CD14-positive monocyte (primary cell): ENCODE measurements at regions of chr2 and their contacts with region 1.

Region 1: DNA sequence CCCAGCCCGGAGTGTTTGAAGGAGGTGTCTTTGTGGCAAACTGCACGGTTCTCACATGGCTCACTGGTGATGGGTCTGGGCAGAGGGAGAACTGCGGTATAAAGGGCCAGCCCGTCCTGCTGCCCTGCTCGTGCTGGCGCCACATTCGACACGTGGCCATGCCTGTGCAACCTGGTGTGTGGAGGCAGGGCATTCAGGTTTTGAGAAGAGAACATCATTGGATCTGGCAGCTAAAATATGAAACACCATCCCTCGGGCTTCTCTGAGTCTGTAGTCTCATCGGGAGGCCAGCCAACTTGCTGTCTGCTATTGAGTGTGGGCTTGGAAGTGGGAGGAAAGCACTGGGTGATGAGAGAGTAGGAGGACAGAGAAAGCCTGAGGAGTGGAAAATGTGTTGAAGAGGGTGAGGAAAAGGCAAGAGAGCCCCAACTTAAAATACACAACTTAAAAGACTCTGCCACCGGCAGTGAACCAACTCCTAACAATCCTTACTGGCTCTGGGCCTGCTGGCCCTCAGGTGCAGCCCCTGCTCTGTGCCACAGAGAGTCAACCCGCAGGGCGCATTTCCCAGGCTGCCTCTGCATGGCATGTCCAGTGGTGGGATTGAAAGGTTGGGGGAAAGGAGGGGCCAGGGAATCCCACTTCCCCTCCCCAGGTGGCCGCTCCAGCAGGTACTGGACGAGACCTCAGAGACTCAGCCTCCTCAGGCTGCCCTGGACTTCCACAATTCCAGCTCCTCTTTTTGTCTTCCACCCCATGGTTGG is 112.7 kb upstream of the DLX2 start:
- DNase-seq: no peak
- H3K4me3 ChIP-seq: no peak overlapping the region
- H3K4me3 Mint-ChIP-seq: no peak overlapping the region
- H3K27ac ChIP-seq: no peak overlapping the region
- H3K27ac Mint-ChIP-seq: no peak overlapping the region
- H3K4me1 ChIP-seq: peaks cover 23 to 33% of the 10 kb centered on the region in 2 donors
- H3K4me1 Mint-ChIP-seq: peaks cover 45% of the 10 kb centered on the region
- H3K27me3 ChIP-seq: no peaks in the 10 kb centered on the region
- H3K27me3 Mint-ChIP-seq: peaks cover 0 to 2% (median 0%) of the 10 kb centered on the region in 3 donors
- CTCF ChIP-seq: no peak

Region 2: DNA sequence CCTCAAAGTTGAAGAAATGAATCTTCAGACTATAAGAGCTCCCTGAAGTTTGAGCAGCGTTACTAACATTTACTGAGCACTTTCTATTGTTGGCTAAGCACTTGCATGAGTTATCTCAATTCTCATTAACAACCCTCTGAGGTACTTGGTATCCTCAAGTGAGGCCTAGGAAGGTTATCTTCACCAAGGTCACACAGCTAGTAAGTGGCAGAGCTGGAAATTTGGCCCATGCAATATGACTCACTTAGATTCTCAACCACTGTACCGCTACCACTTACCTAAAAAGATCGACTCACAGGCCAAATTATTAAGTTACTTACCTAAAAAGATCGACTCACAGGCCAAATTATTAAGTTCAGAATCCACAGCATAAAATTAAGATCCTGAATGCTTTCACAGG is 224.3 kb before region 1 on chr2:
- intact Hi-C with region 1: no loop called
- DNase-seq: no peak
- H3K4me3 ChIP-seq: no peak overlapping the region
- H3K4me3 Mint-ChIP-seq: no peak overlapping the region
- H3K27ac ChIP-seq: no peak overlapping the region
- H3K27ac Mint-ChIP-seq: no peak overlapping the region
- H3K4me1 ChIP-seq: no peaks in the 10 kb centered on the region
- H3K4me1 Mint-ChIP-seq: no peaks in the 10 kb centered on the region
- H3K27me3 ChIP-seq: no peaks in the 10 kb centered on the region
- H3K27me3 Mint-ChIP-seq: peaks cover 3 to 5% (median 5%) of the 10 kb centered on the region in 3 donors
- CTCF ChIP-seq: no peak

Region 3: GRCh38 chr2:172113617-172114016 is 101.7 kb before region 1 on chr2:
- intact Hi-C with region 1: no loop called
- DNase-seq: no peak
- H3K4me3 ChIP-seq: no peak overlapping the region
- H3K4me3 Mint-ChIP-seq: peak overlapping the region in 1 of 2 donors; percentile 31
- H3K27ac ChIP-seq: no peak overlapping the region
- H3K27ac Mint-ChIP-seq: no peak overlapping the region
- H3K4me1 ChIP-seq: peaks cover 10% of the 10 kb centered on the region in 2 donors
- H3K4me1 Mint-ChIP-seq: peaks cover 14% of the 10 kb centered on the region
- H3K27me3 ChIP-seq: peaks cover 17 to 35% of the 10 kb centered on the region in 2 donors
- H3K27me3 Mint-ChIP-seq: peaks cover 20 to 42% (median 32%) of the 10 kb centered on the region in 3 donors
- CTCF ChIP-seq: no peak

Region 4: DNA sequence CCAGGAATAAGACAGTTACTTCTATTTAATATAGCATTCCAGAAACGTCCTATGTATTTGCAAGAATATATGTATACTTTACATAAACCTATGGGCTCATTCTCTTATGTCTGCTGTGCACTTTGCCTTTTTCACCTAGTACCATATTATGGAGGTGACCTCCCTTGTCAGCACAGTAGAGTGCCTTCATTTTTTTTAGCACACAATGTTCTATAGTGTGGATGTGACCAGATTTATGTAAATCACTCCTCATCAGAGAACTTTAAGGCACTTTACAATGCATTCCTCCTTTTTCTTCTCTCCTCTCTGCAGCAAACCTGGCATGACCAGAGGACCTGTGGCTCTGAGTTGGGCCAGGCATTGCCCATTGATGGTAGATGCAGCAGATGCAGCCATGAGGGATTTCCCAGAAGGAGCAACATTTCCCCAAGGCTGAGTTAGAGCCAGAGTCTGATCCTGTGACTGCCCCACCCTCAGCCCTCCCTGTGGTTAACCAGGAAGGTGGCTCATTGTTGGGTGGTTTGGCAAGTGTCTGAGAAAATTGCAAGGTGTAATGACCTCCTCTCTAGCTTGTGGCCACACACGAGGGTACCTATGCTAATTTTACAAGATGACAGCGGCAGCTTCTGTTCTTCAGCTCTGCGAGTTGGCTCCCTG is 36.2 kb before region 1 on chr2:
- intact Hi-C with region 1: loop called in 1 of 2 experiments (anchors 5 kb)
- DNase-seq: peak in 1 of 3 donors; percentile 29
- H3K4me3 ChIP-seq: no peak overlapping the region
- H3K4me3 Mint-ChIP-seq: no peak overlapping the region
- H3K27ac ChIP-seq: no peak overlapping the region
- H3K27ac Mint-ChIP-seq: peak overlapping the region in 1 of 7 donors; percentile 15
- H3K4me1 ChIP-seq: peaks cover 0 to 6% of the 10 kb centered on the region in 2 donors
- H3K4me1 Mint-ChIP-seq: peaks cover 11% of the 10 kb centered on the region
- H3K27me3 ChIP-seq: no peaks in the 10 kb centered on the region
- H3K27me3 Mint-ChIP-seq: peaks cover 0 to 3% (median 0%) of the 10 kb centered on the region in 3 donors
- CTCF ChIP-seq: no peak

Region 5: DNA sequence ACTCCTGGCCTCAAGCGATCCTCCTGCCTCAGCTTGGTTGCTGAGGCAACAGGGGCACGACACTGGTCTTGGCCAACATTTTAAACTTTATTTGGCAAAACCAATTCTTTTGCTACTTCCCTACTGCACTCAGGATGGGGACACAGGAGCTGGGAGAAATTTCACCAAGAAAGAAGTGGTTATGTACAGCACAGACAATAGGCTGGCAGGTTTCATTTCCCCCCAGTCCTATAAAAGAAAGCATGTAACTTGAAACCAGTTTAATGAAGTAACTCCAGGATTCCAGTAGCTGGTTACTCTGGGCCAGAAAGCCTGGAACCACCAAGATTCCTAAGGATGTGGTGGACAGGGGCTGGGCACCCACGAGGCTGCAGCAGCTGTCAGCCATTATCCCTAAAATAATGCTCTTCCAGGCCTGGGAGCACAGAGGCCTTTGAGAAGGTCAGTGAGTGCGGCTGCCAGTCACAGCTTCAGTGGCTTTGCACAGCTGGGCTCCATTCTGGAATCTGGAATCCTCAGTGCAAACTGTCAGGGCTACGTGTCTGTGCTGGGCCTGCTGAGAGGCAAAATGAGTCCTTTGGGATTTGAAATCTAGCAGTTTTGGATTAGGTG is 69.8 kb after region 1 on chr2:
- intact Hi-C with region 1: loop called in 1 of 2 experiments (anchors 10 kb)
- DNase-seq: peak; percentile 25 to 40 (median 39)
- H3K4me3 ChIP-seq: no peak overlapping the region
- H3K4me3 Mint-ChIP-seq: no peak overlapping the region
- H3K27ac ChIP-seq: peak overlapping the region in 1 of 2 donors; percentile 30
- H3K27ac Mint-ChIP-seq: peak overlapping the region in 5 of 7 donors; percentile 35 to 81 (median 50)
- H3K4me1 ChIP-seq: peaks cover 51 to 58% of the 10 kb centered on the region in 2 donors
- H3K4me1 Mint-ChIP-seq: peaks cover 53% of the 10 kb centered on the region
- H3K27me3 ChIP-seq: no peaks in the 10 kb centered on the region
- H3K27me3 Mint-ChIP-seq: no peaks in the 10 kb centered on the region
- CTCF ChIP-seq: no peak

Region 6: GRCh38 chr2:172299737-172300174 is 84.4 kb after region 1 on chr2:
- intact Hi-C with region 1: no loop called
- DNase-seq: peak in 2 of 3 donors; percentile 6 to 14
- H3K4me3 ChIP-seq: no peak overlapping the region
- H3K4me3 Mint-ChIP-seq: peak overlapping the region in 1 of 2 donors; percentile 71
- H3K27ac ChIP-seq: no peak overlapping the region
- H3K27ac Mint-ChIP-seq: no peak overlapping the region
- H3K4me1 ChIP-seq: peaks cover 8 to 15% of the 10 kb centered on the region in 2 donors
- H3K4me1 Mint-ChIP-seq: peaks cover 17% of the 10 kb centered on the region
- H3K27me3 ChIP-seq: no peaks in the 10 kb centered on the region
- H3K27me3 Mint-ChIP-seq: peaks cover 0 to 8% (median 2%) of the 10 kb centered on the region in 3 donors
- CTCF ChIP-seq: no peak